HCT116 (cell line): ENCODE measurements at regions of chr7 and their contacts with region 1.

Region 1: GRCh38 chr7:34430458-34430857 is 227.6 kb upstream of the NPSR1 start:
- DNase-seq: peak; percentile 4
- ATAC-seq: peak; percentile 83
- H3K4me3 ChIP-seq: no peak overlapping the region
- H3K27ac ChIP-seq: no peak overlapping the region
- H3K4me1 ChIP-seq: no peaks in the 10 kb centered on the region
- H3K27me3 ChIP-seq: no peaks in the 10 kb centered on the region
- CTCF ChIP-seq: peak; percentile 63 to 75 (median 73)
- POLR2A ChIP-seq: no peak
- RAD21 ChIP-seq: peak; percentile 78

Region 2: GRCh38 chr7:34321000-34321581 is 109.4 kb before region 1 on chr7:
- CTCF ChIA-PET with region 1: interaction called, 14 read pairs
- POLR2A ChIA-PET with region 1: no interaction called
- RAD21 ChIA-PET with region 1: interaction called in 1 of 2 experiments, 5 read pairs
- intact Hi-C with region 1: loop called (anchors 1 kb)
- DNase-seq: peak; percentile 54
- ATAC-seq: peak; percentile 98
- H3K4me3 ChIP-seq: no peak overlapping the region
- H3K27ac ChIP-seq: no peak overlapping the region
- H3K4me1 ChIP-seq: 0 out of 4 replicates have a peak, but pooled peaks cover 0 to 3% of the 10 kb centered on the region in 2 experiments
- H3K27me3 ChIP-seq: no peaks in the 10 kb centered on the region
- CTCF ChIP-seq: peak; percentile 75 to 91 (median 90); a peak in 5 of 6 replicates
- POLR2A ChIP-seq: no peak
- RAD21 ChIP-seq: peak; percentile 89